ENCODE measurements at regions of chr4 and their contacts with region 1.

Region 1: GRCh38 chr4:122244764-122245163 is 92.6 kb downstream of the BLTP1 start:
- DNase-seq: no peak

Region 2: DNA sequence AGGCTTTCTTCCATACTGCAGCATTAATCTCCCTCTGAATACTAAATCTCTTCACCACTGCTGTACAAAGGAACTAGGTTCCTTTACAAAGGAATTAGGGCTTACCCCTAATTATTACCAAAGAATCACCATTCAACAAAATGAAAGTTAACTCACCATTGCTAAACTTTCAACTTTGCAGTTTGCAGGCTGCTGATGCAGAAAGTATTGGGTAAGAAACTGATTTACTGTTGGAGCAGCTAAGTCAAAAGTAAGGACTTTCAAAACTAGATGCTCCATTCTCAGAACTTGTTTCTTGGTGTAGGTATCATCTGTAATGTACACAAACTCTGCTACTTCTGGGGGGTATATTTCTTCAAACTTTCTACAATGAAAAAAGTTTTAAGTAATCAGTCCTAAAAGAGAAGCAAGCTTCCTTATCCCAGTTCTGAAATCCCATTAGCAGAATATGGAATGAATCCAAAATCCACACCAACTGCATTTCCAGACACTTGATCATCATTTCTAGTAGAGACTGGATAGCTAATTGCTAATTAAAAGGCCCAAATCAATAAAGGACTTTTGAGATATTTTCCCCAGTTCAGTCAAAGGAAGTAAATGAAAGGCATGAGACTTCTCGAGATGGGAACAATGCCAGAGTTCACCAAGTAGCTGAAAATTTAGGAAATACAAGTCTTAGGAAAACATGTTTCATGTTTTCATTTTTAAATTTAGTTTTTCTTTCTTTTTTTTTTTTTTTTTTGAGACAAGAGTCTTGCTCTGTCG is 425.4 kb before region 1 on chr4:
- intact Hi-C with region 1: loop called in 1 of 2 experiments (anchors 5 kb)
- DNase-seq: no peak